OCI-LY7 (cell line): ENCODE measurements at regions of chr7 and their contacts with region 1.

Region 1: GRCh38 chr7:5218564-5219360 is 28.7 kb downstream of the WIPI2 start:
- DNase-seq: peak; percentile 94
- H3K4me3 ChIP-seq: peak overlapping the region; percentile 51
- H3K27ac ChIP-seq: peak overlapping the region; percentile 88
- H3K4me1 ChIP-seq: peaks cover 29% of the 10 kb centered on the region
- CTCF ChIP-seq: no peak

Region 2: DNA sequence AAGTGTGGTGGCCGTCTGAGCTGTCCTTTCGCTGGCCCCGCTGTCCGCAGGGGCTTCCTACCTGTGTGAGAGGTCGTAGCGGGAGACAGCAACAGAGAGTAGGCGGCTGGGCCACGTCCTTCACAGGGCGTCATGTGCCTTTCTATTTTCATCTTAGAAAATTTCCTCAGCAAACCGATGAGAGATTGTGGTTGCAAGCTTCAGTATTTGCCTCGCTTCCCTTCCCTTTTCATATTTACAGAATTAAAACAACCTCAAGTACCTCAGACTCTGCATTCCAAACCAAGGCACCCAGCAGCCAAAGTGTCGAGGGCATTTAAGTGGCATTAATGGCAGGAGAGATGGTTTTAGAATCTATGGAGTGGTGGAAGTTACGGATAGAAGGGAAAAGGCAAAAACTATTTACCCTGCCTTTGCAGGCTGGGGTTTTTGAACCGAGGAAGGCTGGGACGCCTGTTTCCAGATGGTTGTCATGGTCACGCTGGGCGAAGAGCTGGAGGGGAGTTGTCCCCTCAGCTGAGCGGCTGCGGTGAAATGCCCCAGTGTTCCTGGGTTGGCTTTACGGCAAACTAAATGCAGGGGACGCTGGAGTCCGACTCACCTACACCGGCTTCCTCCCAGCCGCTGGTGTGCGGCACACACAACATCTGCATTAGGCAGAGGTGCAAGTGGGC is 13.2 kb after region 1 on chr7:
- CTCF ChIA-PET with region 1: no interaction called
- POLR2A ChIA-PET with region 1: interaction called, 16 read pairs
- intact Hi-C with region 1: loop called (anchors 1 kb)
- DNase-seq: peak; percentile 71
- H3K4me3 ChIP-seq: peak overlapping the region; percentile 15
- H3K27ac ChIP-seq: peak overlapping the region; percentile 70
- H3K4me1 ChIP-seq: peaks cover 56% of the 10 kb centered on the region
- CTCF ChIP-seq: no peak

Region 3: DNA sequence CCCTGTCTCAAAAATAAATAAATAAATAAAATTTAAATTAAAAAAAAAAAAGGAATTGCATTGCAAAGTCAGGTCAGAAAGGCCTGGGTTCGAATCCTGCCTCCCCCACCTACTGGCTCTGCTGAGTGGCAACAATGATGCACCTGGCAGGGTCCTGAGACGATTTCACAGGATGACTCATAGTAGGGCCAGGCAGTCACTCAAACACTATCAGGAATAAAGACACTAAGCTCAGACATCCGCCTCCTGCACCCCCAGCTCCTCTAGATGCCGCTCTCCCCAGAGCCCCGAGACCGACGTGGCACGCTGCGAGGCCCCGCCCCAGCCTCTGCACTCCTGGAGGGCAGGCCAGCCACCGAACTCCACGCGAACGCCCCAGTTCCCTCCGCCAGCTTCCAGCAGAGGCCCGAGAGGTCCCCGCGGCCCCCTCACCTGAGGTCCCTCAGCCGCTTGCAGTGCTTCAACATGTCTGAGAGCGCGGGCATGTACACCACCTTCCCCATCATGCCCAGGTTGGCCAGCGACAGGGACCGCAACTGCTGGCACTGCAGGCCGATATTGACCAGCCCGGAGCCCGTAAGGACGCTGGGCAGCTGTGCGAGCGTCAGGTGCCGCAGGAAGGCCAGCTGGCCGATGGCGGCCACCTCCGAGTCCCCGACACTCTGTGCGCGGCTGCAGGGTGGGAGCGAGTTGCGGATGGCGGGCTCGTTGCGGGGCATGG is 281.5 kb after region 1 on chr7:
- CTCF ChIA-PET with region 1: no interaction called
- POLR2A ChIA-PET with region 1: no interaction called
- intact Hi-C with region 1: no loop called
- DNase-seq: no peak
- H3K4me3 ChIP-seq: no peak overlapping the region
- H3K27ac ChIP-seq: no peak overlapping the region
- H3K4me1 ChIP-seq: peaks cover 13% of the 10 kb centered on the region
- CTCF ChIP-seq: no peak

Region 4: DNA sequence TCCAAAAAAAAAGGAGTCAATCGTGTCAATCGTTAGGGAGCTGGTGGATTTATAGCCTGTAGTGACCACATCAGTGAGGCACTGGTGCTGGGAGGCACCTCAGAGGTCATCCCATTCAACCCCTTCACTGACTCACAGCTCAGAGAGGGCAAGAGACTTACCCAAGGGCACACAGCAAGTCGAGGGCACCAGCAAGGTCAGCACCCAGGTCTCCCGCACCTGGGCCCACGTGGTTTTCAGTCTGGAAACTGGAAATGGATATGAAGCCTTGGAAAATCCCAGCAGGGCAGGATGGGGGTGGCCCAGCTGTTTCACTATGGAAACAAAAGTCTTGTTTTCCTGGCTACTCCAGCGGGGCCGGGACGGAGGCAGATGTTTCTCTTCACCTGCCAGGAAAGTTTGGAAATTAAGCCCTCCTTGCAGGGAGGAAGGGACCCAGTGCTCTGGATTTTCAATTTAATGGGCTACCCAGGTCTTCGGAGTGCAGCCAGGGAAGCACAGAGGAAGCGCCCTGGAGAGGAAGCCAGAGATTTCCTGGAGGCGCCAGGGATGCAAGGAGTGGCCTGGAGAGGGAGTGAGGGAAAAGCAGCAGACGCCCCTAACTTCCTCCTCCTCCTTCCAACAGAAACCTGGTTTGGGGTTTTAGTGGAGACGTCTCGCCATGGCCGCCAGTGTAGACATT is 362.1 kb after region 1 on chr7:
- CTCF ChIA-PET with region 1: no interaction called
- POLR2A ChIA-PET with region 1: no interaction called
- intact Hi-C with region 1: no loop called
- DNase-seq: no peak
- H3K4me3 ChIP-seq: no peak overlapping the region
- H3K27ac ChIP-seq: no peak overlapping the region
- H3K4me1 ChIP-seq: no peaks in the 10 kb centered on the region
- CTCF ChIP-seq: no peak